ENCODE measurements at regions of chr2 and their contacts with region 1.

Region 1: GRCh38 chr2:98805412-98806171 is 74.7 kb upstream of the MGAT4A start:
- DNase-seq: no peak
- ATAC-seq: no peak
- H3K4me3 Mint-ChIP-seq: no peak overlapping the region
- H3K27ac Mint-ChIP-seq: no peak overlapping the region
- H3K4me1 Mint-ChIP-seq: peaks cover 15% of the 10 kb centered on the region
- H3K27me3 Mint-ChIP-seq: no peaks in the 10 kb centered on the region
- CTCF ChIP-seq: no peak

Region 2: DNA sequence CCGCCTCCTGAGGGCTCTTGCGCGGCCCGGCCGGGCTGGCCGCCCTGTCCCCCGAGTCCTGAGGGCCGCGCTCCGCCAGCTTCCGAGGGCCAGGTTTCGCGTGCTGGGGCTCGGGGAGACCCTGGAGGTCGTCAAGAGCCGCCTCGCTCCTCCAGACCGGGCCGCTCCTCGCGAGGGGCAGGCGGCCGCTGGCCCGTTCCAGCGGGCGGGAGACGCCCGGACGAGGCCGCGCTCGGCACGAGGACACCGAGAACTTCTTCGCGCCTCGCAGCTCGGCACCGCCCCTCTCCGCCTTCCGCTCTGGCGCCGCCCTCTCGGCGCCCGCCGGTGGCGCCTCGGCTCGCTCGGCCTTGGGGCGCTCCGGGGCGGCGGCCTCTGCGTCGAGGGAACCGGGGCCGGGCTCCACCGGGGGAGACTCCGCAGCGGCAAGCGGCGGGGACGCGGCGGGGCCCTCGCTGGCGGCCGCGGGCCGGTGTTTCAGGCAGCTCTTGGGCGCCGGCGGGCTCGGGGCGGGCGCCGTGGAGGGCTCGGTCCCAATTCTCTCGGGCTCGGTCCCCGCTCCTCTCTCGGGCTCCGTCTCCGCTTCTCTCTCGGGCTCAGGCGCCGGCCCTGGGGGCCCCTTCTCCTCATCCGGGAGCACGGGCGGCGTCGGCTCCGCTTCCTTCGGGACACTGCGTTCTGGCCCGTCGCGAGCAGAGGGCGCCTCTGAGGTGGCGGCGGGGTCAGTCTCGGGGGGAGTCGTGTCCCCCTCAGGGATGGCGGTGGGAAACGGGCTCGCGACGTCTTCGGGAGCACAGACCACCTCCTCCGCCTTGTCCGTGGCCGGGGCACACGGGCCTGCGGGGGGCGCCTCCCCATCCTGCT is 16.9 kb after region 1 on chr2:
- CTCF ChIA-PET with region 1: interaction called, 14 read pairs
- POLR2A ChIA-PET with region 1: interaction called, 5 read pairs
- intact Hi-C with region 1: no loop called
- DNase-seq: peak; percentile 66
- ATAC-seq: peak; percentile 93
- H3K4me3 Mint-ChIP-seq: peak overlapping the region; percentile 47
- H3K27ac Mint-ChIP-seq: no peak overlapping the region
- H3K4me1 Mint-ChIP-seq: peaks cover 13% of the 10 kb centered on the region
- H3K27me3 Mint-ChIP-seq: peaks cover 2% of the 10 kb centered on the region
- CTCF ChIP-seq: peak; percentile 45

Measured in activated CD8-positive, alpha-beta T cell treated with anti-CD3 and anti-CD28 coated beads for 36 hours (primary cell).